ENCODE measurements at regions of chr6 and their contacts with region 1.

Region 1: GRCh38 chr6:52826513-52826912 is 14.1 kb downstream of the GSTA5 start:
- DNase-seq: no peak
- H3K4me3 ChIP-seq: no peak overlapping the region
- H3K27ac ChIP-seq: no peak overlapping the region
- H3K4me1 ChIP-seq: no peaks in the 10 kb centered on the region
- H3K27me3 ChIP-seq: no peaks in the 10 kb centered on the region
- CTCF ChIP-seq: no peak

Region 2: DNA sequence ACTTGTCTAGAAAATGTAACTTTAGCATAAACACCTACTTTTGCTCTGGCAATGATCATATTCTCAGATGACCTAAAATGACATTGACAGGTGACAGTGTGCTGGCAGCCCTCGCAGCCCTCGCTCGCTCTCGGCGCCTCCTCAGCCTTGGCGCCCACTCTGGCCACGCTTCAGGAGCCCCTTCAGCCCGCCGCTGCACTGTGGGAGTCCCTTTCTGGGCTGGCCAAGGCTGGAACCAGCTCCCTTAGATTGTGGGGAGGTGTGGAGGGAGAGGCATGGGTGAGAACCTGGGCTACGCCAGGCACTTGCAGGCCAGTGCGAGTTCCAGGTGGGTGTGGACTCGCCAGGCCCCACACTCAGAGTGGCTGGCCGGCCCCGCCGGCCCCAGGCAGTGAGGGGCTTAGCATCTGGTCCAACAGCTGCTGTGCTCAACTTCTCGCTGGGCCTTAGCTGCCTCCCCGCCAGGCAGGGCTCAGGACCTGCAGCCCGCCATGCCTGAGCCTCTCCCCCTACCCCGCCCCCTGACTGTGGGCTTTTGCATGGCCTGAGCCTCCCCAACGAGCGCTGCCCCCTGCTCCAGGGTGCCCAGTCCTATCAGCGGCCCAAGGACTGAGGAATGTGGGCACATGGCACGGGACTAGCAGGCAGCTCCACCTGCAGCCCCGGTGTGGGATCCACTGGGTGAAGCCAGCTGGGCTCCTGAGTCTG is 40.1 kb before region 1 on chr6:
- CTCF ChIA-PET with region 1: no interaction called
- POLR2A ChIA-PET with region 1: no interaction called
- intact Hi-C with region 1: loop called (anchors 1 kb)
- DNase-seq: no peak
- H3K4me3 ChIP-seq: no peak overlapping the region
- H3K27ac ChIP-seq: no peak overlapping the region
- H3K4me1 ChIP-seq: no peaks in the 10 kb centered on the region
- H3K27me3 ChIP-seq: no peaks in the 10 kb centered on the region
- CTCF ChIP-seq: no peak

Region 3: GRCh38 chr6:53059648-53060589 is 233.4 kb after region 1 on chr6:
- CTCF ChIA-PET with region 1: no interaction called
- POLR2A ChIA-PET with region 1: no interaction called
- intact Hi-C with region 1: no loop called
- DNase-seq: peak; percentile 21
- H3K4me3 ChIP-seq: peak overlapping the region; percentile 91
- H3K27ac ChIP-seq: peak overlapping the region; percentile 91
- H3K4me1 ChIP-seq: peaks cover 8% of the 10 kb centered on the region
- H3K27me3 ChIP-seq: no peaks in the 10 kb centered on the region
- CTCF ChIP-seq: no peak

Measured in A673 (cell line).